Sciatic nerve (tissue), 2 donors: ENCODE measurements at regions of chrX and their contacts with region 1.

Region 1: DNA sequence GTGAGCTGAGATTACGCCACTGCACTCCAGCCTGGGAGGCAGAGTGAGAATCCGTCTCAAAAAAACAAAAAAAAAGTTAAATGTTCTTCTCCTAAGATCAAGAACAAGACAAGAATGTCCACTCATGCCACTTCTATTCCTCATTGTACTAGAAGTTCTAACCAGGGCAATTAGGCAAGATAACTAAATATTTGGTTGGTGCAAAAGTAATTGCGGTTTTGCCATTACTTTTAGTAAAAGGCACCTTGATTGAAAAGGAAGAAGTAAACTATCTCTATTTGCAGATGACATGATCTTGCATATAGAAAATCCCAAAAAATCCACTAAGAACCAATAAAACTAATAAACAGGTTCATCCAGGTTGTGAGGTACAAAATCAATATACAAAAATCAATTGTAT is 24.0 kb upstream of the SLC7A3 start:
- DNase-seq: no peak
- ATAC-seq: no peak

Region 2: GRCh38 chrX:70908541-70908940 is 46.3 kb before region 1 on chrX and contains the start of gene TEX11:
- intact Hi-C with region 1: loop called (anchors 10 kb)
- DNase-seq: no peak
- ATAC-seq: no peak
- total RNA-seq, gene TEX11: not detected